Activated CD4-positive, alpha-beta T cell treated with anti-CD3 and anti-CD28 coated beads, Interleukin-2, amount 10 ng/mL, durations not matched to agents 24 days and 14 days (primary cell): ENCODE measurements at regions of chr15 and their contacts with region 1.

Region 1: DNA sequence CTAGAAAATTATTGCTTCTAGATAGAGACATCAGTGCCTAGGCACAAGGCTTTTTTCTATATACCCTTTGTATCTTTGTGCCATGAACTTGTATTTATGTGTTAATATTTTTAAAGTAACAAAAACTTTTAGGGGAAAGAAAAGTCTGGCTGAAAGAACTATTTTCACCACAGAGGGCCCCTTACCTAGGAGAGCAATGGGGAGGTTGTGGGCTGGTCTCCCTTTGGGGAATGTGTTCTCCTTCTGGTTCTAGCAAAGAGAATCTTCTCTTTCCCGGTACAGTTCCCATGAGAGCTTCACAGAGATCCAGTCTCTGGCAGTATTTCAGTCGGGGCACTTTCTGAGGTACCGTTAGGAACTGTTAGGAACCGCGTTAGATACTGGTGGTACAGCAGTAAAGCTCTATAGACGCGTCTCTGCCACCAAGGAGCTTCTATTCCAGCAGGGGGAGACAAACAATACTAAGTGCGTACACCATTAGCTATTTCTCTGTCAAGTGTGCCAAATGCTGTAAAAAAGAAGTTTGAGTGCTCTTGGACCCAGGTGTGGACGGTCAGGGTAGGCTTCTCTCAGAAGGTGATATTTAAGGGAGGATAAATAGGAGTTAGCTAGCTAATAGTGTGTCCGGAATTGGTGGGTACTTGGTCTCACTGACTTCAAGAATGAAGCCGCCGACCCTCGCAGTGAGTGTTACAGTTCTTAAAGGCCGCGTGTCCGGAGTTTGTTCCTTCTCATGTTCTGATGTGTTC is 4.6 kb upstream of the EPB42 start:
- DNase-seq: peak; percentile 87
- H3K4me3 Mint-ChIP-seq: no peak overlapping the region
- H3K27ac Mint-ChIP-seq: no peak overlapping the region
- H3K4me1 Mint-ChIP-seq: peaks cover 5% of the 10 kb centered on the region
- H3K27me3 Mint-ChIP-seq: peaks cover 14% of the 10 kb centered on the region

Region 2: GRCh38 chr15:43268111-43269105 is 43.0 kb after region 1 on chr15:
- intact Hi-C with region 1: loop called (anchors 5 kb)
- DNase-seq: no peak
- H3K4me3 Mint-ChIP-seq: no peak overlapping the region
- H3K27ac Mint-ChIP-seq: no peak overlapping the region
- H3K4me1 Mint-ChIP-seq: peaks cover 9% of the 10 kb centered on the region
- H3K27me3 Mint-ChIP-seq: peaks cover 14% of the 10 kb centered on the region

Region 3: GRCh38 chr15:43285609-43286037 is 60.2 kb after region 1 on chr15:
- intact Hi-C with region 1: loop called (anchors 1 kb)
- DNase-seq: peak; percentile 90
- H3K4me3 Mint-ChIP-seq: no peak overlapping the region
- H3K27ac Mint-ChIP-seq: no peak overlapping the region
- H3K4me1 Mint-ChIP-seq: peaks cover 6% of the 10 kb centered on the region
- H3K27me3 Mint-ChIP-seq: peaks cover 10% of the 10 kb centered on the region

Region 4: DNA sequence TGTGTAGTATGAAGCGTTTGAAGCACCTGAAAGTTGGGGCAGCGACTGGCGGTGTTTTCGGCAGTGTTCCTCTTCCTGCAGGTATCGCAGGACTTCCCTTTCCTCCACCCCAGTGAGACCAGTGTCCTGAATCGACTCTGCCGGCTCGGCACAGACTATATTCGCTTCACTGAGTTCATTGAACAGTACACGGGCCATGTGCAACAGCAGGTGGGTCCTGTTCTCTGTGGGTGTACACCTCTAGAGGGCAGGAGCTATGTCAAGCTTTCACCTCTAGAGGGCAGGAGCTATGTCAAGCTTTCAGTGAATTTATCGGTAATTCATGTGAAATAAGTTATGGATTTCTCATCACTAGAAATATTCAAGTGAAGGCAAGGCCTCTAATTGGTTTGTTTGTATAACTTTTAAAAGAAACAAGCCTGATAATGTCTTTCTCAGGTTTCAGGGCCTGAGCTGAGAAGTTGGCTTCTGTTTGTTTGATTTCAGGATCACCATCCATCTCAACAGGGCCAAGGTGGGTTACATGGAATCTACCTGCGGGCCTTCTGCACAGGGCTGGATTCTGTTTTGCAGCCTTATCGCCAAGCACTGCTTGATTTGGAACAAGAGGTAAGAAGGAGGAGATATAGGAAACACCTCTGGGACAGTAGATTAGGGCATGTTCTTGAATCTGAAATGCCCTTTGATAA is 150.8 kb after region 1 on chr15:
- intact Hi-C with region 1: no loop called
- DNase-seq: peak; percentile 81
- H3K4me3 Mint-ChIP-seq: no peak overlapping the region
- H3K27ac Mint-ChIP-seq: no peak overlapping the region
- H3K4me1 Mint-ChIP-seq: peaks cover 22% of the 10 kb centered on the region
- H3K27me3 Mint-ChIP-seq: no peaks in the 10 kb centered on the region